Activated T-helper 1 cell treated with anti-CD3 and anti-CD28 coated beads, Interleukin-12 subunit alpha, Interleukin-12 subunit beta, Interleukin-2, Interleukin-4 antibody, amounts not matched to agents 30 ng/mL and 10 ng/mL and 1 ng/mL, durations not matched to agents 14 hours and 24 hours and 36 hours (primary cell): ENCODE measurements at regions of chr15 and their contacts with region 1.

Region 1: GRCh38 chr15:99250494-99251435 is 516 bp upstream of the LRRC28 start:
- DNase-seq: peak; percentile 96
- H3K4me3 Mint-ChIP-seq: peak overlapping the region; percentile 89
- H3K27ac Mint-ChIP-seq: peak overlapping the region; percentile 82
- H3K4me1 Mint-ChIP-seq: peaks cover 31% of the 10 kb centered on the region
- H3K27me3 Mint-ChIP-seq: no peaks in the 10 kb centered on the region

Region 2: GRCh38 chr15:97960364-97961066 is 1290.2 kb before region 1 on chr15 and contains the start of gene ARRDC4:
- intact Hi-C with region 1: loop called (anchors 5 kb)
- DNase-seq: peak; percentile 97
- H3K4me3 Mint-ChIP-seq: peak within 1 kb of the TSS; percentile 82
- H3K27ac Mint-ChIP-seq: peak within 1 kb of the TSS; percentile 75
- H3K4me1 Mint-ChIP-seq: peaks cover 35% of the 10 kb centered on the region
- H3K27me3 Mint-ChIP-seq: peaks cover 16% of the 10 kb centered on the region
- total RNA-seq, gene ARRDC4: 1.3 and 1.5 TPM in 2 replicates

Region 3: GRCh38 chr15:99104788-99105513 is 145.8 kb before region 1 on chr15 and contains the start of gene SYNM:
- intact Hi-C with region 1: loop called (anchors 1 kb)
- DNase-seq: peak; percentile 39
- H3K4me3 Mint-ChIP-seq: peak within 1 kb of the TSS; percentile 69
- H3K27ac Mint-ChIP-seq: no peak within 1 kb of the TSS
- H3K4me1 Mint-ChIP-seq: peaks cover 12% of the 10 kb centered on the region
- H3K27me3 Mint-ChIP-seq: peaks cover 36% of the 10 kb centered on the region
- total RNA-seq, gene SYNM: 2.0 and 2.2 TPM in 2 replicates

Region 4: GRCh38 chr15:99239545-99240198 is 11.1 kb before region 1 on chr15:
- intact Hi-C with region 1: loop called (anchors 1 kb)
- DNase-seq: peak; percentile 11
- H3K4me3 Mint-ChIP-seq: no peak overlapping the region
- H3K27ac Mint-ChIP-seq: no peak overlapping the region
- H3K4me1 Mint-ChIP-seq: peaks cover 12% of the 10 kb centered on the region
- H3K27me3 Mint-ChIP-seq: peaks cover 4% of the 10 kb centered on the region

Region 5: GRCh38 chr15:99275525-99276128 is 24.9 kb after region 1 on chr15:
- intact Hi-C with region 1: loop called (anchors 1 kb)
- DNase-seq: no peak
- H3K4me3 Mint-ChIP-seq: no peak overlapping the region
- H3K27ac Mint-ChIP-seq: no peak overlapping the region
- H3K4me1 Mint-ChIP-seq: peaks cover 34% of the 10 kb centered on the region
- H3K27me3 Mint-ChIP-seq: no peaks in the 10 kb centered on the region

Region 6: GRCh38 chr15:99733268-99734039 is 482.7 kb after region 1 on chr15 and contains the start of gene LYSMD4:
- intact Hi-C with region 1: loop called (anchors 1 kb)
- DNase-seq: peak; percentile 97
- H3K4me3 Mint-ChIP-seq: peak within 1 kb of the TSS; percentile 86
- H3K27ac Mint-ChIP-seq: peak within 1 kb of the TSS; percentile 88
- H3K4me1 Mint-ChIP-seq: peaks cover 34% of the 10 kb centered on the region
- H3K27me3 Mint-ChIP-seq: no peaks in the 10 kb centered on the region
- total RNA-seq, gene LYSMD4: 10.1 and 10.3 TPM in 2 replicates